H1 (cell line): ENCODE measurements at regions of chr15 and their contacts with region 1.

Region 1: DNA sequence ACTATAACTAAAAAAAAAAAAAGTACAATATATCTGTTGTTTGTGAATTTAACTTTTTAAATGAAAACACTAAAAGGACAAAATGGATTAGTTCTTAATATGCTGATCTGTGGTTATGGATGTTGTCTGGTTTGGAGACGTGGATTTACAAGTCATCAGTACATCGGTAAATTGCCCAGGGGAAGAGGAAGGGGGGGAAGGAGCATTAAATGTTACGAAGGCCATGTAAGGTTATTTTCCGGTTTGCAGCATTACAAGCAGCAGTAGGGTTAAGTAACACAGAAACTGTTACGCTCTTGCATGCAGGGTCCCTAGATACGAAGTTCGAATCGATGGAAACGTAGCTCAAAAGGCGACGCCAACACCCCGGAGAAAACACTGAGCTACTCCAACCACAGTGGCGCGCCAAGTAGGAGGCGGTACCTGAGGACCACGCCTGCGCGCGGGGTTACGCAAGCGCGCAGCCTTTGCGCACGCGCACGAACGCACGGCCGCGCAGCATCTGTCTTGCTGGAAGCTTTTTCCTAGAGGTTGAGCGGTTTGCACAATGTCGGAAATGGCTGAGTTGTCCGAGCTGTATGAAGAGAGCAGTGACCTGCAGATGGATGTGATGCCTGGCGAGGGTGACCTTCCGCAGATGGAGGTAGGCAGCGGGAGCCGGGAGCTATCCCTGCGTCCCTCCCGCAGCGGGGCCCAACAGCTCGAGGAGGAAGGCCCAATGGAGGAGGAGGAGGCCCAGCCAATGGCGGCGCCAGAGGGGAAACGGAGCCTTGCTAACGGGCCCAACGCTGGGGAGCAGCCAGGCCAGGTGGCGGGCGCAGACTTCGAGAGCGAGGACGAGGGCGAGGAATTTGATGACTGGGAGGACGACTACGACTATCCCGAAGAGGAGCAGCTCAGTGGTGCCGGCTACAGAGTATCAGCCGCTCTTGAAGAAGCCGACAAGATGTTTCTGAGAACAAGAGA is at the start of gene EID1:
- DNase-seq: peak; percentile 76 to 91
- H3K4me3 ChIP-seq: peak within 1 kb of the TSS; percentile 74 to 93 (median 82)
- H3K27ac ChIP-seq: peak within 1 kb of the TSS; percentile 90
- H3K4me1 ChIP-seq: 0 out of 7 replicates have a peak, but pooled peaks cover 0 to 4% (median 0%) of the 10 kb centered on the region in 4 experiments
- H3K27me3 ChIP-seq: no peaks in the 10 kb centered on the region
- CTCF ChIP-seq: no peak
- EP300 ChIP-seq: no peak
- POLR2A ChIP-seq: peak; percentile 46 to 91
- RAD21 ChIP-seq: no peak
- total RNA-seq, gene EID1: 110 and 135 TPM in 2 replicates

Region 2: DNA sequence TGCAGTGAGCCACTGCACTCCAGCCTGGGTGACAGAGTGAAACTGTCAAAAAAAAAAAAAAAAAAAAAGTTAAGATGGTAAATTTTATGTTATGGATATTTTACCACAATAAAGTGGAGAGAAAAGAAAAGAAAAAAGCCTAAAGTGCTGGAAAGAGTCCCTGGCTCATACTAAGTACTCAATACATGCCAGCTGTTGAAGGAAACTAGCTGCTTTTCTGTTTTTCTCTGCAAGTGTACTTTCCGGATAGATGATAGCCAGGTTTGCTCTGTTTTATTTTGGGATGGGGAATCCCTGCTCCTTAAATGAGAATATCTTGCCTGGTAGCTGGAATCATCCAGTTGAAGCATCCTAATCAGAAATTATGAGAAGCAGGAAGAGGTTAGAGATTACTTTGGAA is 10.9 kb after region 1 on chr15:
- CTCF ChIA-PET with region 1: interaction called, 12 read pairs
- POLR2A ChIA-PET with region 1: interaction called, 6 read pairs
- DNase-seq: no peak
- H3K4me3 ChIP-seq: no peak overlapping the region
- H3K27ac ChIP-seq: no peak overlapping the region
- H3K4me1 ChIP-seq: no peaks in the 10 kb centered on the region
- H3K27me3 ChIP-seq: no peaks in the 10 kb centered on the region
- CTCF ChIP-seq: no peak
- EP300 ChIP-seq: no peak
- POLR2A ChIP-seq: no peak
- RAD21 ChIP-seq: no peak

Region 3: GRCh38 chr15:48896869-48897814 is 19.2 kb after region 1 on chr15:
- CTCF ChIA-PET with region 1: interaction called, 12 read pairs
- POLR2A ChIA-PET with region 1: interaction called, 15 read pairs
- DNase-seq: no peak
- H3K4me3 ChIP-seq: no peak overlapping the region; a peak in 1 of 8 replicates
- H3K27ac ChIP-seq: no peak overlapping the region
- H3K4me1 ChIP-seq: peaks cover 2 to 6% (median 3%) of the 10 kb centered on the region in 4 experiments; a peak in 3 of 7 replicates
- H3K27me3 ChIP-seq: no peaks in the 10 kb centered on the region
- CTCF ChIP-seq: no peak
- EP300 ChIP-seq: no peak
- POLR2A ChIP-seq: no peak
- RAD21 ChIP-seq: no peak